ENCODE measurements at regions of chr3 and their contacts with region 1.

Region 1: GRCh38 chr3:79521238-79521848 is 246.5 kb downstream of the ROBO1 start:
- DNase-seq: no peak
- H3K4me3 Mint-ChIP-seq: no peak overlapping the region
- H3K27ac Mint-ChIP-seq: no peak overlapping the region
- H3K4me1 Mint-ChIP-seq: no peaks in the 10 kb centered on the region
- H3K27me3 Mint-ChIP-seq: no peaks in the 10 kb centered on the region

Region 2: DNA sequence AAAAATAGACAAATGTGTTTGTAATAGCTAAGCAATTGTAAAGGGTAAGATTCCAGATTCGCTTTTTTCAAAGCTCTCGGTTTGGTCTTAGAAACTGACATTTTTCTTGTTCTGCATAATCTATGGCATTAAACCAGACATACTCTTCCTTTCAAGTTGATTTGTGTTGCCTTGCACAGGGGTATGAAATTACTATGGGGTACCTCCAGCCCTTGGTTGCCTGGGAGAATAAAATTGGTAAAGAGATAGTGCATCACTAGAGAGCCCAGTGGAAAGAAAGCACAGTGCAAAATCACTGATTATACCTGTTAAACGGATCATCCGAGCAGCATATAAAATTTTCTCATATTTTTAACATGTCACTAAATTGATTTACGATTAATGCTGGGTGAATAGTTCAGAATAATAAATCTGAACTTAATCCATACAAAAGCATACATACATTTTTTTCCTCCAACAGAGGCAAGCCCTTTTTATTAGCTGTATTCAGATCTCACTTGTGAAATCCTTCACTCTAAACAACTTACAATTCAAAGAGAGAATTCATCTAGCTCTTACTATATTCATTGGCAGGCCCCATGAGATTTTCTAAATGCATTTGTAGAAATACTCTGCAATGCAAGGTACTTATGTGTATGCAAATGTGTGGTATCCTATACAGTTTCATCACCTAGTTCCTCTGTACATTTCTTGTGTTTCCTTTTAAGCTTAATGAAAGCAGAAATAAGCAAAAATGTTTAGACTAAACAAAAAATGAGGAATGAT is 22.1 kb after region 1 on chr3:
- CTCF ChIA-PET with region 1: no interaction called
- POLR2A ChIA-PET with region 1: no interaction called
- intact Hi-C with region 1: no loop called
- DNase-seq: no peak
- H3K4me3 Mint-ChIP-seq: no peak overlapping the region
- H3K27ac Mint-ChIP-seq: no peak overlapping the region
- H3K4me1 Mint-ChIP-seq: no peaks in the 10 kb centered on the region
- H3K27me3 Mint-ChIP-seq: no peaks in the 10 kb centered on the region

Region 3: DNA sequence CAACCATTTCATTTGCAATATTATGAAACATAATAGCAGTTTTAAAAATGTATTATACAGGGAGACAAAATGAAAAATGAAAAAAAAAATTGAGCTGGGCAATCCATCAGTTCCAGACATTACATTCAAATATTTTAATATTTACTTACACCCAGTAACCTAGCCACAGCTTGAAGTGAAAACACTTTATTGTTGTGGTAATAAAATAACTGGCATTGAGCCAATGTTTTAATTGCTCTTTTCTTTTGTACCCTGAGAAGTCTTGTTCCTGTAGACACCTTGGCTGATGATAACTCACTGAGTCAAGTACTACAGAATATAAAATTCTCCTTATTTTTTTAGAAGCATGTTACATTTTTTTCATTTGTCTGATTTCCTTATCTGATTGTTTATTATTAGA is 65.8 kb after region 1 on chr3:
- CTCF ChIA-PET with region 1: no interaction called
- POLR2A ChIA-PET with region 1: no interaction called
- intact Hi-C with region 1: no loop called
- DNase-seq: no peak
- H3K4me3 Mint-ChIP-seq: no peak overlapping the region
- H3K27ac Mint-ChIP-seq: no peak overlapping the region
- H3K4me1 Mint-ChIP-seq: no peaks in the 10 kb centered on the region
- H3K27me3 Mint-ChIP-seq: no peaks in the 10 kb centered on the region

Region 4: GRCh38 chr3:79846148-79846933 is 325.0 kb after region 1 on chr3:
- CTCF ChIA-PET with region 1: no interaction called
- POLR2A ChIA-PET with region 1: no interaction called
- intact Hi-C with region 1: loop called (anchors 2 kb)
- DNase-seq: no peak
- H3K4me3 Mint-ChIP-seq: no peak overlapping the region
- H3K27ac Mint-ChIP-seq: no peak overlapping the region
- H3K4me1 Mint-ChIP-seq: no peaks in the 10 kb centered on the region
- H3K27me3 Mint-ChIP-seq: no peaks in the 10 kb centered on the region

Region 5: GRCh38 chr3:80688814-80689213 is 1167.5 kb after region 1 on chr3:
- CTCF ChIA-PET with region 1: no interaction called
- POLR2A ChIA-PET with region 1: no interaction called
- intact Hi-C with region 1: loop called (anchors 10 kb)
- DNase-seq: no peak
- H3K4me3 Mint-ChIP-seq: no peak overlapping the region
- H3K27ac Mint-ChIP-seq: no peak overlapping the region
- H3K4me1 Mint-ChIP-seq: no peaks in the 10 kb centered on the region
- H3K27me3 Mint-ChIP-seq: no peaks in the 10 kb centered on the region

Measured in activated CD4-positive, alpha-beta memory T cell treated with anti-CD3 and anti-CD28 coated beads for 36 hours (primary cell).